ENCODE measurements at regions of chr1 and their contacts with region 1.

Region 1: GRCh38 chr1:32179443-32180185 is at the start of gene TXLNA:
- DNase-seq: peak; percentile 94
- H3K4me3 ChIP-seq: peak within 1 kb of the TSS; percentile 53 to 90 (median 89)
- H3K27ac ChIP-seq: peak within 1 kb of the TSS; percentile 88
- H3K4me1 ChIP-seq: peaks cover 22% of the 10 kb centered on the region
- H3K27me3 ChIP-seq: no peaks in the 10 kb centered on the region
- CTCF ChIP-seq: peak in 1 of 2 donors; percentile 29
- POLR2A ChIP-seq: peak; percentile 78
- total RNA-seq, gene TXLNA: 64.3 and 69.4 TPM in 2 replicates

Region 2: DNA sequence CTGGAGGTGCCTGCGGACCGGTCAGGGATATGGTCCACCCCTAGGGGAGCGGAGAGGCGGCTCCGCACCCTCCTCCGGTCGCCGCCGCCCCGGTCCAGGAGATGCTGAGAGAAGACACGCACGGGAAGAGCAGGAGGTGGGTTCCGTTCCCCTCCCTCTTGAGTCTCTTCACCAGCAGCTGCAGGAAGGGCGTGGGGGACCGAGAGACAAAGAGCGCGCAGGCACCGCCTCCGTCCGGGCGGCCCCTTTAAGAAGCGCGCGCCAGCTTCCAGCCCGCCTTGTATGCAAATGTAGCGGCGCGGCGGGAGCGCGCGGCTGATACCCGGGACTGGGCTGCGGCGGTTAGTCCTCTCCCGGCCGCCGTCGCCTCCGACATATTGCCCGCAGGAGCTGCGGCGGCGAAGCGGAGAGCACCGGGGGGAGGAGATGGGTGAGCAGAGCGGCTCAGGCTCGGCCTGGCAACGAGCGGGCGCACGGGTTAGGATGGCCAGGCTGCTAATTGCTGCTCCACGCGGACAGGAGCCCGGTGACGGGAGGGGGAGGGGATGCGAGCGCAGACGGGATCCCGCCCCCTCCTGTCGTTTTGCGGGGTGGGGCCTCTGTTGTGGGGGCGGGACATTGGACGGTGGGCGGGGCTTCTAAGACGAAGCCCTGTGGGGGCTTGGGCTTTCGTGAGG is 106.9 kb before region 1 on chr1 and contains the start of gene TMEM39B:
- CTCF ChIA-PET with region 1: interaction called, 6 read pairs
- POLR2A ChIA-PET with region 1: interaction called, 3 read pairs
- dilution Hi-C with region 1: no loop called
- intact Hi-C with region 1: loop called (anchors 1 kb)
- DNase-seq: peak; percentile 94
- H3K4me3 ChIP-seq: peak within 1 kb of the TSS; percentile 74 to 78 (median 77)
- H3K27ac ChIP-seq: peak within 1 kb of the TSS; percentile 93
- H3K4me1 ChIP-seq: peaks cover 43% of the 10 kb centered on the region
- H3K27me3 ChIP-seq: no peaks in the 10 kb centered on the region
- CTCF ChIP-seq: no peak
- POLR2A ChIP-seq: peak; percentile 76
- total RNA-seq, gene TMEM39B: 43.7 and 47.3 TPM in 2 replicates

Region 3: GRCh38 chr1:32116531-32116930 is 63.1 kb before region 1 on chr1:
- CTCF ChIA-PET with region 1: no interaction called
- POLR2A ChIA-PET with region 1: no interaction called
- dilution Hi-C with region 1: no loop called
- intact Hi-C with region 1: loop called (anchors 2 kb)
- DNase-seq: no peak
- H3K4me3 ChIP-seq: no peak overlapping the region
- H3K27ac ChIP-seq: no peak overlapping the region
- H3K4me1 ChIP-seq: peaks cover 4% of the 10 kb centered on the region
- H3K27me3 ChIP-seq: no peaks in the 10 kb centered on the region
- CTCF ChIP-seq: no peak
- POLR2A ChIP-seq: no peak

Region 4: GRCh38 chr1:32200226-32201010 is 20.8 kb after region 1 on chr1 and contains the start of gene CCDC28B:
- CTCF ChIA-PET with region 1: no interaction called
- POLR2A ChIA-PET with region 1: interaction called, 4 read pairs
- dilution Hi-C with region 1: no loop called
- intact Hi-C with region 1: loop called (anchors 2 kb)
- DNase-seq: peak; percentile 66
- H3K4me3 ChIP-seq: peak within 1 kb of the TSS; percentile 49 to 60 (median 56)
- H3K27ac ChIP-seq: peak within 1 kb of the TSS; percentile 54
- H3K4me1 ChIP-seq: peaks cover 19% of the 10 kb centered on the region
- H3K27me3 ChIP-seq: no peaks in the 10 kb centered on the region
- CTCF ChIP-seq: no peak
- POLR2A ChIP-seq: no peak
- total RNA-seq, gene CCDC28B: 12.0 and 15.3 TPM in 2 replicates

Measured in endothelial cell of umbilical vein (primary cell).